Common myeloid progenitor, CD34-positive (primary cell): ENCODE measurements at regions of chr2 and their contacts with region 1.

Region 1: DNA sequence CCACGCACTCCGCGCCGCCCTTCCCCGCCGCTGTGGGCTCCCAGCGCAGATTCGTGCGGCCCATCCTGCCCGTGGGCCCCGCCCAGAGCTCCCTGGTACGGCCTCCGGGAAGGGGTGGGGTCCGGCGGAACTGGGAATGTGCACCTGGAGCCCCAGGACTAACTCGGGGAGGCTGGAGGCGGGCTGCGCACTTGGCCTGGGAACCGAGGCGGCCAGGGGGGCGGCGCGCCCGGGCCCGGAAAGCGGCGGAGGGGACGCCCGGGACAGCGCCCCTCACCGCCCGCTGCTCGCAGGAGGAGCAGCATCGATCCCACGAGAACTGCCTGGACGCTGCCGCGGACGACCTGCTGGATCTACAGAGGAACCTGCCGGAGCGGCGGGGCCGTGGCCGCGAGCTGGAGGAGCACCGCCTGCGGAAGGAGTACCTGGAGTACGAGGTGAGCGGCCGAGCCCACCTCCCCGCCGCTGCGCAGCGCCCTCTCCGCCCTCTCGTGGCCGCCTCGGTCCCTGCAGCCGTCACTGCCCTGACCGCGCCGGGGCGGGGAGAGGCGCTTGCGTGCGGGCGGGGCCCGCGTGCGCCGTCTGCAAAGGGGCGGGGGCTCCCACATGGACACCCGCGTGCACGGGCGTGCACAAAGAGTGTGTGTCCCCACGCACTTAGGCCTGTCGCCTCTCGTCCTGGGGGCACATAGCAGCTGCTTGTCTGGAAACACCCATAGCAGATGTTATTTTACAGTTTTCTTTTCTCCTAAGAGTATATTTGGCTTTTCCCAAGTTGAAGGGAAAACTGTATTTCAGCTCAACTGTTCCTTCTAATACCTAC is 25.2 kb downstream of the PSD4 start:
- DNase-seq: peak; percentile 72 to 79 (median 78)
- H3K4me3 ChIP-seq: peak overlapping the region in 6 of 7 experiments; percentile 19 to 86 (median 62)
- H3K27ac ChIP-seq: no peak overlapping the region
- H3K4me1 ChIP-seq: peaks cover 0 to 7% (median 2%) of the 10 kb centered on the region in 4 experiments
- H3K27me3 ChIP-seq: no peaks in the 10 kb centered on the region

Region 2: DNA sequence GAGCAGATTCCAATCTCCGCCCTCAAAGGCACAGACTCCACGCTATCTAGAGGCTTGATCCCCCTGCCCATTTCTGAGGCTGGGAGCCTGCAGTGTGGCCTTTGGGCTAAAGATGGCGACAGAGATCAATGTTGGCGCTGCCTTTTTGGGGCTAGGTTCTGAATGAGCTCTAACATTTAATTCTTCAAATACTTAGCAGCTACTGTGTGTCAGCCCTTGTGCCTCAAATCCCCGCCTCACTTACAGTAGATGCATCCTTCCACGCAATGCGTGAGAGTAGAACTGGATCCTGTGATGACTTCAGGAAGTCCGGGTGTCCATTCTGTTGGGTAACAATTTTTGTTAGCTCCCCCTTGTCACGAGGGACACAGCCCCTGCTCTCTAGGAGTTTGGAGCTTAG is 118.9 kb before region 1 on chr2:
- CTCF ChIA-PET with region 1: interaction called, 57 read pairs
- POLR2A ChIA-PET with region 1: interaction called, 3 read pairs
- DNase-seq: peak; percentile 21 to 55 (median 48)
- H3K4me3 ChIP-seq: no peak overlapping the region
- H3K27ac ChIP-seq: no peak overlapping the region
- H3K4me1 ChIP-seq: peaks cover 0 to 2% (median 0%) of the 10 kb centered on the region in 4 experiments
- H3K27me3 ChIP-seq: no peaks in the 10 kb centered on the region

Region 3: DNA sequence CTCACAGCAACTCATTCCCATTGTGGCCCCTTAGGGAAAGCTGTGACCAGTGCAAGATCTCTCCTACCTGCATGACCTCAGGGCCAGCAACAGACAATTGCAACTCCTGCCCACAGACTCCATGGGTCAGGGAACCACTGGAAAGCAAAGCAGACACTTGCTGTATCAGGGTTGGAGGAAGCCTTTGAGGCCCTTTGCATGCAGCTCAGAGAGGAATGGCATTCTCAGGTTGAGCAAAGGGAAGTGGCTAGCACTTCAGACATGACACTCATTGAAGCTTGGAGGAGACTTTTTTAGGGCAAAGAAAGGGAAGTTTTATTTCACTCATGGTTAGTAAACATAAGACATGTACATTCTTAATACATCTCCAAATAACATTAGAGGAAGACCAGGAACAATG is 109.1 kb before region 1 on chr2:
- CTCF ChIA-PET with region 1: interaction called, 11 read pairs
- POLR2A ChIA-PET with region 1: interaction called, 3 read pairs
- DNase-seq: peak in 2 of 3 donors; percentile 22 to 26
- H3K4me3 ChIP-seq: no peak overlapping the region
- H3K27ac ChIP-seq: no peak overlapping the region
- H3K4me1 ChIP-seq: peaks cover 0 to 11% (median under 1%) of the 10 kb centered on the region in 4 experiments
- H3K27me3 ChIP-seq: no peaks in the 10 kb centered on the region

Region 4: DNA sequence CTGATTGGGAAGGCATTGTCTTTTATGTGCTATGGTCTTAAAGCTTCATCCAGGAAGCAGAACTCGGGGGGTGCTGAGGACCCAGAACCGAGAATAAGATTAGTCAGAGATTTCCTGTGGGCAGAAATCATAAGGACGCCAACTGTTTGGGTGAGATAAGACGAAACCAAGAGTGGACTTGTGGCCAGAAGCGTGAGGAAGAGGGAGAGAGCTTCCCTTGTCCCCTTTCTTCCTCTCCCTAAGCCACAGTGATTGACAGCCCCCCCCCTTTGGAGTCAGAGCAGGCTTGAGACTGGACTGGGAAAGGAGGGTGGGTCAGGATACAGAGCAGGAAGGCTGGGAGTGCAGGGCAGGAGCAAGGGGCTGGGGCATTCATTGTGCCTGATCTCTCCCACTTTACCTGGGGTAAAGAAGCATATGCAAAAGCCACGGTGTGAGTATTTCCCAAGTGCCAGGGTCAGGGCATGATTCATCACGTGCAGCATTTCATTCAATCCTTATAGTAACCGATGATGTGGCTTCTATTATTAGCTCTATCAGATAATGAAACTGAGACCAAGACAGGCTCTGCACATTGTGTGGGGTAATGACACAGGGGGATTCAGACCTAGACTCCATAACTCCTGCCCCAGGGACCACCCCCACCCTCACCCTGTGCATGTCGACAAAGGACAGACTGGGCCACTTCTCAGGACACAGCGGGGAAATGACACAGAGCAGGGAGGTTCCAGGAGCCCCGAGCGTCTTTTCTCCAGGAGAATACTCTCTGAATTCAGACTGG is 74.6 kb before region 1 on chr2:
- CTCF ChIA-PET with region 1: interaction called, 13 read pairs
- POLR2A ChIA-PET with region 1: no interaction called
- DNase-seq: peak; percentile 86 to 98 (median 95)
- H3K4me3 ChIP-seq: peak overlapping the region in 4 of 7 experiments; percentile 25 to 61 (median 46)
- H3K27ac ChIP-seq: no peak overlapping the region
- H3K4me1 ChIP-seq: peaks cover 2 to 44% (median 20%) of the 10 kb centered on the region in 4 experiments
- H3K27me3 ChIP-seq: no peaks in the 10 kb centered on the region

Region 5: DNA sequence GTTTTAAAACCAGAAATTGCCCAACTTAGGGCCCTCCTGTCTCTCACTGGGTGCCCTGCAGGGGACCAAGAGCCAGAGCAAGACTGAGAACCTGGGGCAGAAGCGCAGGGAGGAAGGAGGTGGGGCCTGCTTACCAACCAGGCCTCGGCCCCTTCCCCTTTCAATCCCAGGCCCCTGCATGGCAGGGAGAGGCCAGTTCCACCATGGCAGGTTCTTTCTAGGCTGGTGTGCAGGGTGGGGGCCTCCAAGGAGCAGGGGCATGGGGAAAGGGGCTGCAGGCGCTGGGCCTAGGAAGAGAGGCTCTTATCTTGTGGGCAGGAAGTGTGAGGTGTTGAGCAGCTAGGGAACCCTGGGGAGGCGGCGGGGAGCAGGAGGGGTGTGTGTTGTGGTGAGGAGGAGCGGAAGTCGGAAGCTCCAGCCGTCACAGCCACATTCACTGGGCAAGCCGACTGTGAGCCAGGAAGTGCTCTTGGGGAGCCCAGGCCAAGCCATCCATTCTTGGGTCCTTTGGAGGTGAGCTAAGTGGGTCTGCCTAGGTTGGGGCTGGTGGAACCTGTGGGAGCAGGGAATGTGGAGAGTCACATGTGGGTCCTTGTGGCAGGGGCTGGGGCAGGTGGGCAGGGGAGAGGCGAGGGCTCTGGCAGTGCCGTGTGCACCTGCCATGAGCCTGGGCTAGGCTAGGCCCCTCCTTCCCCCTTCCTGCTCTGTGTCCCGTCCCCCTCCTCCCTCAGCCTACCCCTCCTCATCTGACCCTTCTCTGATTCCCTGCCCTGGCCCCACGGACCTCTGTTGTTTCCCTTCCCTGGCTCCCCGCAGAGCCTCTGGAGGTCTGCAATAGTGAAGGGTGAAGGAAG is 25.2 kb before region 1 on chr2 and contains the start of gene PSD4:
- CTCF ChIA-PET with region 1: interaction called, 80 read pairs
- POLR2A ChIA-PET with region 1: no interaction called
- DNase-seq: peak; percentile 87 to 95 (median 93)
- H3K4me3 ChIP-seq: peak within 1 kb of the TSS; percentile 42 to 83 (median 75)
- H3K27ac ChIP-seq: peak within 1 kb of the TSS; percentile 59 to 80
- H3K4me1 ChIP-seq: peaks cover 11 to 55% (median 48%) of the 10 kb centered on the region in 4 experiments
- H3K27me3 ChIP-seq: no peaks in the 10 kb centered on the region

Region 6: DNA sequence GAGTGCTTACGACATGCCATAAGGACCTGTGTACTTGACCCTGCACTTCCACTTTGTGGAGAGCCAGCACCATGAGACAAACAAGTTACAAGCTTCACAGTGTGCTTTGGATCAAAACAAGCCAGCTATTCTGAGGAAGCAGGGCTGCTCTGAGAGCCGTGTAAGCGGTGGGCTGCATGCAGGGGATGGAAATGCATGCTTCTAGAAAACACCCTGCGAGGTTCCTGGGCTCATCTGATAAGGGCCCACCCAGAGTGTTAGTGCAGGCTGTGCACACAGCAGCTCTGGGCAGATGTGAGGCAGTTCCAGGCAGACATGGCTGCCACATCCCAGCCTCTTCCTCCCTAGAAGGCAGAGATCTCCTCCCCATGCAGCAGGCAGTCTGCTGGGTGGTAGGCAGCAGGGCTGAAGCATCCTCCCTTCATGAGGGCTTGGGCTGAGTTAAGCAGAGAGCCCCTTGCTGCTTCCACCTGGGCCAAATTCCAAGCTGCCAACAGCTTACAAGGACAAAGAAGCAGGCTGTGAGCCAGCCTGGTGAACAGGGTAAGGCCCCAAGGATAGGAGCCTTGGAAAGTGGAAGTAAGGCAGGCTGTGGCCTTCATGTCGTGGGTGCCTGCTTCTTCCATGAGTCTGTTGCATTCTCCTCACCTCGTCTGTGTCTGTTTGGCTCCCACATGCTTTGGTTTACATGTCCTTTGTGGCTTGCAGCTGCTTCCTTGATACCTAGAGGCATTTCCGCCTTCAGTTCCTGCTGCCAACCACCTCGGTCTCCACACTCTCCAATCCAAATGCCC is 17.5 kb before region 1 on chr2:
- CTCF ChIA-PET with region 1: interaction called, 80 read pairs
- POLR2A ChIA-PET with region 1: no interaction called
- DNase-seq: peak in 2 of 3 donors; percentile 71 to 82
- H3K4me3 ChIP-seq: peak overlapping the region in 3 of 7 experiments; percentile 9 to 34 (median 15)
- H3K27ac ChIP-seq: no peak overlapping the region
- H3K4me1 ChIP-seq: peaks cover 3 to 44% (median 37%) of the 10 kb centered on the region in 4 experiments
- H3K27me3 ChIP-seq: no peaks in the 10 kb centered on the region